MCF 10A (cell line): ENCODE measurements at regions of chr16 and their contacts with region 1.

Region 1: GRCh38 chr16:31382485-31383161 is 10.5 kb upstream of the ITGAD start:
- DNase-seq: peak; percentile 60
- H3K4me3 Mint-ChIP-seq: no peak overlapping the region
- H3K27ac Mint-ChIP-seq: no peak overlapping the region
- H3K4me1 Mint-ChIP-seq: peaks cover 15% of the 10 kb centered on the region
- H3K27me3 Mint-ChIP-seq: no peaks in the 10 kb centered on the region
- CTCF ChIP-seq: peak; percentile 65

Region 2: DNA sequence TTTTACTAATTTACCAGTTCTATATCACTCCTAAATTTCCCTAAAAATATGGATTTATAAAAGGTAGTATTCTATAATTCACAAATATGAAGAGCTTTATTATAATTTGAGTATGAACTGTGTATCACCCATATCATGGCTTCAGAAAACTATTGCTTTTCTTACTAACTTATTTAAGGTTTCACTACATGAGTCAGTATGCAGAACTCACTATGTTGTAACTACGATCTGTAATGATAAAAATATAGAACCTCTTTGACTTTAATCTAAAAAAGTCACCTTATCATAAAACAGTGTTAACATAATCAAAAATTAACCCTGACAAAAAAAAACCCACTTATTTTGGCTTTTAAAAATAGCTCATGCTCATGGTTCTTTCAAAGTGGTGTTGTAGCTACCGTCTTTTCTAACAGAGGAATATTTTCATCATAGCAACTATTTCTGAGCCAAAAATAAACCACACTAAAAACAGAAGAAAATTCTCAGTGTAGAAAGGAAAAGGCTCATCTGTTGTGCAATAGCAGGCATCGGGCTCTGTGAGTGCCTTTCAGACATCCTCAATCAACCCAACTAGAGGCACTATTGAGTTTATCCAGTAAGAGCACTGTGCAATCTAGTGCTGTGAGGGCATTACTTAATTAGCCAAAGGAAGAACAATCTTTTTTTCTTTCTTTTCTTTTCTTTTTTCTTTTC is 80.8 kb before region 1 on chr16:
- CTCF ChIA-PET with region 1: interaction called, 6 read pairs
- POLR2A ChIA-PET with region 1: no interaction called
- intact Hi-C with region 1: loop called (anchors 5 kb)
- DNase-seq: peak; percentile 52
- H3K4me3 Mint-ChIP-seq: no peak overlapping the region
- H3K27ac Mint-ChIP-seq: no peak overlapping the region
- H3K4me1 Mint-ChIP-seq: no peaks in the 10 kb centered on the region
- H3K27me3 Mint-ChIP-seq: peaks cover 43% of the 10 kb centered on the region
- CTCF ChIP-seq: no peak

Region 3: DNA sequence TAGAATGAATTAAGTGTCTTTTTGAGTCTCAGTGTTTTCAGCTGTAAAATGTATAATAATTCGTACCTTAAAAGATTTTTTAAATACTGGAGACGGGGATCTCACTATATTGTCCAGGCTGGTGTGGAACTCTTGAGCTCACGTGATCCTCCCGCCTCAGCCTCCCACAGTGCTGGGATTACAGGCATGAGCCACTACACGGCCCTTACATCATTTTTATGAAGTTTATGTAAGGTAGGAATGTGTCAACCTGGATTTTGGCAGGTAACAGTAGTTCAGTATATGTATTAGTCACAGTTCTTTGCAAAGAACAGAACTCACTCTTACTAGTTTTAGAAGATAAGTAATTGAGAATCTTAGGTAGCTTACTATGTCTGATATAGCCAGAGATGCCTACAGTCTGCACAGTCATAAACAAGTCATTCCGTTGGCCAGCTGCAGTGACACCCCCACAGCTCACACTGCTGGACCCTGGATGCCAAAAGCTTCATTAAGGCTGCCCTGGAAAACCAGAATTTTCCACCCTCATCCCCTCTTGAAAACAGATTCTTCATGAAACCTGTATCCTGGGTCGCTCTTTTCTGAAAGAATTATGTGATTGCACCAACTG is 46.1 kb after region 1 on chr16:
- CTCF ChIA-PET with region 1: interaction called, 10 read pairs
- POLR2A ChIA-PET with region 1: interaction called, 3 read pairs
- intact Hi-C with region 1: no loop called
- DNase-seq: peak; percentile 34
- H3K4me3 Mint-ChIP-seq: no peak overlapping the region
- H3K27ac Mint-ChIP-seq: no peak overlapping the region
- H3K4me1 Mint-ChIP-seq: no peaks in the 10 kb centered on the region
- H3K27me3 Mint-ChIP-seq: no peaks in the 10 kb centered on the region
- CTCF ChIP-seq: no peak